ENCODE measurements at regions of chrX and their contacts with region 1.

Region 1: GRCh38 chrX:101348452-101349192 is at the start of gene TIMM8A:
- DNase-seq: peak; percentile 94
- H3K4me3 Mint-ChIP-seq: peak within 1 kb of the TSS; percentile 92
- H3K27ac Mint-ChIP-seq: peak within 1 kb of the TSS; percentile 93
- H3K4me1 Mint-ChIP-seq: peaks cover 2% of the 10 kb centered on the region
- H3K27me3 Mint-ChIP-seq: no peaks in the 10 kb centered on the region
- total RNA-seq, gene TIMM8A: 28.3 and 32.8 TPM in 2 replicates

Region 2: GRCh38 chrX:101097546-101098453 is 250.8 kb before region 1 on chrX and contains the start of gene CENPI:
- intact Hi-C with region 1: loop called (anchors 2 kb)
- DNase-seq: peak; percentile 98
- H3K4me3 Mint-ChIP-seq: peak within 1 kb of the TSS; percentile 96
- H3K27ac Mint-ChIP-seq: peak within 1 kb of the TSS; percentile 89
- H3K4me1 Mint-ChIP-seq: peaks cover 24% of the 10 kb centered on the region
- H3K27me3 Mint-ChIP-seq: no peaks in the 10 kb centered on the region
- total RNA-seq, gene CENPI: 14.9 and 19.4 TPM in 2 replicates

Region 3: GRCh38 chrX:101390664-101391525 is 42.3 kb after region 1 on chrX and contains the start of gene RPL36A:
- intact Hi-C with region 1: loop called (anchors 1 kb)
- DNase-seq: peak; percentile 94
- H3K4me3 Mint-ChIP-seq: peak within 1 kb of the TSS; percentile 97
- H3K27ac Mint-ChIP-seq: peak within 1 kb of the TSS; percentile 98
- H3K4me1 Mint-ChIP-seq: peaks cover 10% of the 10 kb centered on the region
- H3K27me3 Mint-ChIP-seq: no peaks in the 10 kb centered on the region
- total RNA-seq, gene RPL36A: 252 and 278 TPM in 2 replicates

Measured in activated CD4-positive, alpha-beta T cell treated with anti-CD3 and anti-CD28 coated beads, Interleukin-2, amount 10 ng/mL, durations not matched to agents 24 days and 14 days (primary cell).